Head of caudate nucleus (tissue), 42 donors: ENCODE measurements at regions of chr11 and their contacts with region 1.

Region 1: DNA sequence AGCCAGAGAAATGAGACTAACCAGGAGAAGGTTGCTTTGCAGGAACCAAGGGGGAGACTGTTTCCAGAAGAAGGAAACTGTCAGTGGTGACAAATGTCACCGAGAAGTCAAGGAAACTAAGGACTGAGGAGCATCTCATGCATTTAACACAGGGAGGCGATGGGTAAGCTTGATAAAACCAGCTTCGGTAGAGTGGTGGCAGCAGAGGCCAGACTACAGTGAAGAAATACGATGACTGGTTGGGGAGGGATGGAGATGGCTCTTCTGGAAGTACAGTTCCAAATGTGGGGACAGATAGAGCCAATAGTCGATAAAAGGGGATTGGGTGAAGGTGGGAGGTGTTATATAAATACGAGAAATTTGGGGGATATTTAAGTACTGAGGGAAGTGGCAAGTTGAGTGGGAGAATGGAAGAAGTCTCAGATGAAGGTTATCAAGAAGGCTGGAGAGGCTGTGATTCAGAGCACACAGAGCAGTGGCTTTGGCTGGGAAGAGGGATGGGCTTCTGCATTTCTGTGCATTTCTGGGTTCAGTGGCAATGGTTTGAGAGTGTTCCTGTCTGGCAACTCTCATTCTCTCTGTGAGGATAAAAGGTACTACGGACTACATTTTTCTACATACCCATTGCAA is 29.2 kb downstream of the SC5D start:
- DNase-seq: peak; percentile 16 to 86 (median 68)

Region 2: DNA sequence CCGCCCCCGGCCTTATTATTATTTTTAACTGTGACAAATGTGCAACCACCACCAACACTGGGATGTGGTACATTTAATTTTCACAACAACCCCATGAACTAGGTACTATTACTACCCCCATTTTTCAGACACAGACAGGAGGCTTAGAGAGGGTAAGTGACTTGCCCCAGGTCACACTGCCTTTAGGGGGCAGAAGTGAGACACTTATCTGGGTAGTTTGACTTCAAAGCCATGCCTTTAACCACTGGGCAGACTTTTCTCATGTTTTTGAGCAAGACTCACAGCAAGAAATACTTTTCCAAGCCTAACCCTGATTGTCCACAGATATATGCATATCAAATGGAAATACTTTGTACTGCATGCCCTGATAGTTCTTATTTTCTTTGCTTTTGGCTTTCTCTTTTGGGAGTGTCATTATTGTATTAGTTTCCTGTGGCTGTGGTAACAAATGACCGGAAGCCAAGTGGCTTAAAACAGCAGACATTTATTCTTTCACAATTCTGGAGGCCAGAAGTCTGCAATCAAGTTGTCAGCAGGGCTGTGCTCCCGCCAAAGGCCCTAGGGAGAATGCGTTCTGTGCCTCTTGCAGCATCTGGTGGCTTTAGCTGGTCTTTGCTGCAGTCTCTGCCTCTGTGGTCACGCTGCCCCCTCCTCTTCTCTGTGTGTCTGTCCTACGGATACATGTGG is 699.4 kb before region 1 on chr11:
- intact Hi-C with region 1: no loop called
- DNase-seq: no peak

Region 3: GRCh38 chr11:121358760-121359159 is 37.0 kb after region 1 on chr11:
- intact Hi-C with region 1: no loop called
- DNase-seq: no peak

Region 4: DNA sequence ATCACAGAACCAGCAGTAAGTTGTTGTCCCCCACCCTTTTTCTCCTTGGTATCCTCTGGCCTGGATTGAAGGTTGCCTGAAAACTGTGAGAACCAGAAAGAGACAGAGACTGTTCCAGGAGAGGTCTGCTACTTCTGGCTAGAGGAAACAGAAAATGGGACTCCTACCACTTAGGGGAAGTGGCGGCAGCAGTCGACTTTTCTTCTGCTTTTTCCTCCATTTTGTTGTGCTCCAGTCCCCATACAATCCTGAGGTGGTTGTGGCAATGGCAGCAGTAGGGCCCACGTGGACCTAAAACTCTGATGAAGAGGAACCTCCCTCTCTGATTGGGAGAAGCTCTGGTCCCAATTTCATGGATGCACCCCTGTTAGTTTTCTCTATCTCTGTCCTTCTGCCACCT is 54.4 kb after region 1 on chr11:
- intact Hi-C with region 1: no loop called
- DNase-seq: no peak

Region 5: GRCh38 chr11:121417055-121417551 is 95.4 kb after region 1 on chr11:
- intact Hi-C with region 1: no loop called
- DNase-seq: peak; percentile 21 to 85 (median 60)

Region 6: GRCh38 chr11:121451986-121452608 is 130.4 kb after region 1 on chr11 and contains the start of gene SORL1:
- intact Hi-C with region 1: loop called (anchors 10 kb)
- DNase-seq: peak; percentile 65 to 93 (median 84)

Region 7: GRCh38 chr11:121533601-121534000 is 211.9 kb after region 1 on chr11:
- intact Hi-C with region 1: loop called (anchors 2 kb)
- DNase-seq: no peak

Region 8: GRCh38 chr11:121591405-121592033 is 269.8 kb after region 1 on chr11:
- intact Hi-C with region 1: loop called (anchors 2 kb)
- DNase-seq: peak in 40 of 42 donors; percentile 34 to 91 (median 76)